Adrenal gland (tissue), 19 donors: ENCODE measurements at regions of chr2 and their contacts with region 1.

Region 1: GRCh38 chr2:28392297-28393113 is at the start of gene FOSL2:
- DNase-seq: peak; percentile 97 to 99 (median 98)
- H3K4me3 ChIP-seq: peak within 1 kb of the TSS; percentile 87 to 90 (median 89)
- H3K27ac ChIP-seq: peak within 1 kb of the TSS; percentile 94 to 100 (median 98)
- H3K4me1 ChIP-seq: peaks cover 12 to 18% of the 10 kb centered on the region in 2 donors
- H3K27me3 ChIP-seq: no peaks in the 10 kb centered on the region
- CTCF ChIP-seq: peak in 2 of 6 experiments; percentile 2 to 11
- POLR2A ChIP-seq: peak; percentile 98 to 100
- total RNA-seq, gene FOSL2: 66.9 to 760 (median 429) TPM

Region 2: GRCh38 chr2:27703638-27704341 is 688.7 kb before region 1 on chr2:
- intact Hi-C with region 1: loop called in 1 of 2 experiments (anchors 10 kb)
- DNase-seq: peak; percentile 87 to 96 (median 89)
- H3K4me3 ChIP-seq: no peak overlapping the region
- H3K27ac ChIP-seq: peak overlapping the region in 3 of 5 donors; percentile 51 to 85 (median 54)
- H3K4me1 ChIP-seq: peaks cover 22 to 37% of the 10 kb centered on the region in 2 donors
- H3K27me3 ChIP-seq: no peaks in the 10 kb centered on the region
- CTCF ChIP-seq: peak; percentile 93 to 98 (median 95)
- POLR2A ChIP-seq: no peak

Region 3: DNA sequence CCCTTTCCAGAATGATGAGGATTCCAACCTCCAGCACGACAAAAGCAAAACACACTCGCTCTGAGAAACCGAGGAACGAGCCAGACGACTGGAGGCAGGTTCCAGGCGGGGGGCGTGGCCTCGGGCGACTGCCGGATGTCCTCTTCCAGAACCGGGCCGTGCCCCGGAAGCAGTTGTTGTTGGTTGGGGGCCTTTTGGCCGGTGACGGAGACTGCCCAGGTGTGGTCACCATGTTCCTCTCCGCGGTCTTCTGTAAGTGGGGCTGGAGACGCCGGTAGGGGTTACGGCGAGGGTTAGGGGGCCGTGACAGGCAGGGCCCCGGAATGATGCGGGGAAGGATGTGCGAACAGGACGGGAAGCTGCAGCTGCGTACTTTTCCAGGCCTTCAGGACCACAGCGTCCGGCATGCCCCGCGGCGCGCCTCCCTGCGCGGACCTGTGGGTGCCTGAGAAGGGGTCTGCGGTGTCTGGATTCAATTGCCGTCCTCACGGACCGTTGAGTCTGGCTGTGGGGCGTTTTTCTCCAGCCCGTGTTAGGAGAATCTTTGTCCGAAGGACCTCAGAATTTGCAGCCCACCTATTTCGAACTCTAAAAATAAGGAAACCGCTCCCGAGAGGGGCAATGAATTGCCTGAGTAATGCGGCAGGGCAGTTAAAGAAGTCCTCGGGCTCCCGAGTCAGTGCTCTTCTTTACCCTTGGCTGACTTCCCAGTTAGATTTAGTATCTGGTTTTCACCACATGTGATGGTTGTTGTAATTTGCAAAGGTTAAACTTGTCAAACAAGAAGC is 620.8 kb before region 1 on chr2 and contains the start of gene MRPL33:
- intact Hi-C with region 1: loop called in 1 of 2 experiments (anchors 10 kb)
- DNase-seq: peak; percentile 96 to 99 (median 98)
- H3K4me3 ChIP-seq: peak within 1 kb of the TSS; percentile 49 to 90 (median 56)
- H3K27ac ChIP-seq: peak within 1 kb of the TSS; percentile 70 to 95 (median 92)
- H3K4me1 ChIP-seq: peaks cover 24 to 28% of the 10 kb centered on the region in 2 donors
- H3K27me3 ChIP-seq: no peaks in the 10 kb centered on the region
- CTCF ChIP-seq: no peak
- POLR2A ChIP-seq: peak; percentile 81 to 82
- total RNA-seq, gene MRPL33: 211 to 1,020 (median 479) TPM

Region 4: GRCh38 chr2:27954771-27955383 is 437.6 kb before region 1 on chr2:
- intact Hi-C with region 1: loop called in 1 of 2 experiments (anchors 5 kb)
- DNase-seq: peak; percentile 60 to 88 (median 78)
- H3K4me3 ChIP-seq: peak overlapping the region in 1 of 4 donors; percentile 8
- H3K27ac ChIP-seq: peak overlapping the region; percentile 49 to 79 (median 72)
- H3K4me1 ChIP-seq: peaks cover 43 to 82% of the 10 kb centered on the region in 2 donors
- H3K27me3 ChIP-seq: no peaks in the 10 kb centered on the region
- CTCF ChIP-seq: peak in 5 of 6 experiments; percentile 36 to 50 (median 42)
- POLR2A ChIP-seq: peak in 1 of 2 donors; percentile 44

Region 5: DNA sequence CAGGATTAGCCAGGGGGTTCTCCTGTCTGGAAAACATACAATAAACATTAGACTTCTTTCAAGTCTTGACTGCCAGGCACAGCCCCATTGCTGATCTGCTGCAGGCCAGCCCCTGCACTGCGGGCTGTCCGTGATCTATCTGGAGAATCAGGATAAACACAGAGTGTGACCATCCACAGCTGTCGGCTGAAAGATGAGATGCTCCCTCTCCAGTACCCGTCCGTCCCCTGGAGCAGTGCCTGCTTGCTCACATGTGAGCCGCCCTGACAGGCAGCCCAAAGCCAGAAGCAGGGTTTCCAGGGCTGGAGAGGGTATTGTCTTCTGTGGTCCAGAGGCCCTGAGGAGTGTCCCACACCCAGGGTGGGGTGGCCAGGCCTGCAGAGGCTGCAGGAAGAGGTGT is 45.9 kb before region 1 on chr2:
- intact Hi-C with region 1: no loop called
- DNase-seq: no peak
- H3K4me3 ChIP-seq: no peak overlapping the region
- H3K27ac ChIP-seq: no peak overlapping the region
- H3K4me1 ChIP-seq: peaks cover 8 to 27% of the 10 kb centered on the region in 2 donors
- H3K27me3 ChIP-seq: no peaks in the 10 kb centered on the region
- CTCF ChIP-seq: no peak
- POLR2A ChIP-seq: no peak

Region 6: GRCh38 chr2:28736034-28736433 is 343.5 kb after region 1 on chr2:
- intact Hi-C with region 1: no loop called
- DNase-seq: peak; percentile 79 to 93 (median 90)
- H3K4me3 ChIP-seq: no peak overlapping the region
- H3K27ac ChIP-seq: peak overlapping the region in 1 of 5 donors; percentile 52
- H3K4me1 ChIP-seq: peaks cover 7 to 10% of the 10 kb centered on the region in 2 donors
- H3K27me3 ChIP-seq: no peaks in the 10 kb centered on the region
- CTCF ChIP-seq: no peak
- POLR2A ChIP-seq: no peak